Activated naive CD4-positive, alpha-beta T cell treated with anti-CD3 and anti-CD28 coated beads for 36 hours (primary cell): ENCODE measurements at regions of chr10 and their contacts with region 1.

Region 1: GRCh38 chr10:64041185-64041988 is 520.2 kb downstream of the REEP3 start:
- DNase-seq: peak; percentile 92
- H3K4me3 Mint-ChIP-seq: peak overlapping the region; percentile 59
- H3K27ac Mint-ChIP-seq: no peak overlapping the region
- H3K4me1 Mint-ChIP-seq: peaks cover 4% of the 10 kb centered on the region
- H3K27me3 Mint-ChIP-seq: peaks cover 10% of the 10 kb centered on the region

Region 2: GRCh38 chr10:63866075-63866746 is 175.2 kb before region 1 on chr10:
- CTCF ChIA-PET with region 1: interaction called, 5 read pairs
- intact Hi-C with region 1: loop called (anchors 1 kb)
- DNase-seq: peak; percentile 65
- H3K4me3 Mint-ChIP-seq: no peak overlapping the region
- H3K27ac Mint-ChIP-seq: no peak overlapping the region
- H3K4me1 Mint-ChIP-seq: peaks cover 10% of the 10 kb centered on the region
- H3K27me3 Mint-ChIP-seq: peaks cover 29% of the 10 kb centered on the region

Region 3: GRCh38 chr10:64054392-64054791 is 13.0 kb after region 1 on chr10:
- CTCF ChIA-PET with region 1: interaction called, 13 read pairs
- intact Hi-C with region 1: no loop called
- DNase-seq: no peak
- H3K4me3 Mint-ChIP-seq: no peak overlapping the region
- H3K27ac Mint-ChIP-seq: no peak overlapping the region
- H3K4me1 Mint-ChIP-seq: no peaks in the 10 kb centered on the region
- H3K27me3 Mint-ChIP-seq: peaks cover 6% of the 10 kb centered on the region

Region 4: DNA sequence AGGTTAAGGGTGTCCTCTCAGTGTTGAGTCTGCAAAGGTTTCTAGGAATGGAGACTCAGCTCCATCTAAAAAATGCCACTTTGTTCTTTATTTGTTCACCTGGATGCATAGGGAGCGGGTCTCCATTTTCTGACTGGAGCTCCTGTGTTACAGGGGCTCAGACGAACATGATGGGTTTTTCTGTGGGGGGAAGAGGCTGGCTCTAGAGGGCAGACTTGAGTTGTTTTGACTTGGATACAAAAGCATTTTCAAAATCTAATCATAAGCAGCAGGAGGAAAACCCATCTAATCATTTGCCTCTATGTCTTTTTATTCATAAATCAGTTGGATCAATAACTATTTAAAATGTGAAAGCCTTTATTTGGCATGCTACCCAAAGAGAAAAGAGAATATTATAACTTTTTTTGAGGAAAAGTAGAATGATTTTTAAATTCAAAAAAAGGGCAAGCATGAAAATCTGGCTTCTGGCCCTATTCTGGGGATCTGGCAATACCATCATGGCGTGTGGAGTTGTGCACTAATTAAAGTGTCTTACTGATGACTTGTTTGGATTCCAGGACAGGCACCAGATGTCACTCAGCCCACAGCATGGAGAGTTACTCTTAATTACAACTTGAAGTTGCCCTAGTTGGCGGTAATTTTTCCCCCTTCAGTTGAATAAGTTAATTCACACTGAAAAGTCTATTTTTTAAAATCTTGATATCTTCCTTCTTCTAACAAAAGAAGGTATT is 74.7 kb after region 1 on chr10:
- CTCF ChIA-PET with region 1: interaction called, 4 read pairs
- intact Hi-C with region 1: loop called (anchors 2 kb)
- DNase-seq: peak; percentile 22
- H3K4me3 Mint-ChIP-seq: no peak overlapping the region
- H3K27ac Mint-ChIP-seq: no peak overlapping the region
- H3K4me1 Mint-ChIP-seq: peaks cover 5% of the 10 kb centered on the region
- H3K27me3 Mint-ChIP-seq: peaks cover 2% of the 10 kb centered on the region